ENCODE measurements at regions of chr19 and their contacts with region 1.

Region 1: DNA sequence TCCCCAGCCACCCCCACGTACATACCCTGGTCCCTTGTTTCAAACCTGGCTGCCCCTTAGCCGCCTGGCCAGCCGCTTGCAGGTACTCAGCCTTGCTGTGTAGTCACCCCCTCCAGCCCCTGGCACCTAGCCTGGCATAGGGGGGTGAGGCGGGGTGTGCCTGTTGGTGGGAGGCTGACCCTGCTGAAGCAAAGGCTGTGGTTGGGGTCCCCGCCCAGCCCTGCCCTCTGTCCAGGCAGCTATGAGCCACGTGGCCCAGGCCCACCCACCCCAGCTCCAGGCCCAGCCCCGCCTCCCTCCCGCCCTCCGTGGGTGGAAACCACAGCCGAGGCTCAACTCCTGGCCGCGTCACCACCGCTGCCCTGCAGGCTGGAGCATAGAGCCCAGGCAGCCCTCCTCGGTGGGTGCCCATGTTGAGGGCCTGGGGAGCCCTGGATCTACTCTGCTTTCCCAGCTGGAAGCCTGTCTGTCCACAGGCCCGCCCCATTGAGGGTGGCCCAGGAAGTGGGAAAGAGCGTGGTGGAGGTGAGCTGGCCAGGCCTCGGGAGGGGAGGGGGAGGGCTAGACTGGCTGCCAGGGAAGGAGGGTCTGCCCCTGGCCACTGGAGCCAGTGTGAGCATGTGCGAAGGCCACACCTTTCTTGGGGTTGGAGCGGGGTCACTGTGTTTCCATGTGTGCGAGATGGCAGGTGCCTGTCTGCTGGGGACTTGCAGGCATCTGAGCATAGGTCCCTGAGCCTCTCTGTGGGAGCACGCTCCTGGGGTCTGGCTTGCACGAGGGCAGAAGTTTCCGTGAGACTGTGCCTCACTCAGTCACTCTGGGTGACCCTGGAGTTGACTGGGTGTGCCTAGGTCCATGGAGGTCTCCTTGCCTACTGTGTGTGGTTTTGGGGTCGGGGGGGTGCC is 31.0 kb downstream of the PAK4 start:
- DNase-seq: no peak
- H3K4me3 ChIP-seq: no peak overlapping the region
- H3K4me3 Mint-ChIP-seq: no peak overlapping the region
- H3K27ac ChIP-seq: no peak overlapping the region
- H3K27ac Mint-ChIP-seq: peak overlapping the region in 1 of 8 donors; percentile 3
- H3K4me1 ChIP-seq: no peaks in the 10 kb centered on the region
- H3K4me1 Mint-ChIP-seq: peaks cover 29 to 47% (median 35%) of the 10 kb centered on the region in 3 donors
- H3K27me3 ChIP-seq: no peaks in the 10 kb centered on the region
- H3K27me3 Mint-ChIP-seq: no peaks in the 10 kb centered on the region

Region 2: GRCh38 chr19:38658462-38659306 is 497.9 kb before region 1 on chr19:
- CTCF ChIA-PET with region 1: no interaction called
- POLR2A ChIA-PET with region 1: interaction called, 11 read pairs
- DNase-seq: no peak
- H3K4me3 ChIP-seq: no peak overlapping the region
- H3K4me3 Mint-ChIP-seq: peak overlapping the region in 2 of 7 donors; percentile 20 to 84
- H3K27ac ChIP-seq: no peak overlapping the region
- H3K27ac Mint-ChIP-seq: peak overlapping the region; percentile 57 to 94 (median 83)
- H3K4me1 ChIP-seq: peaks cover 75% of the 10 kb centered on the region
- H3K4me1 Mint-ChIP-seq: peaks cover 75 to 93% (median 87%) of the 10 kb centered on the region in 3 donors
- H3K27me3 ChIP-seq: no peaks in the 10 kb centered on the region
- H3K27me3 Mint-ChIP-seq: no peaks in the 10 kb centered on the region

Region 3: DNA sequence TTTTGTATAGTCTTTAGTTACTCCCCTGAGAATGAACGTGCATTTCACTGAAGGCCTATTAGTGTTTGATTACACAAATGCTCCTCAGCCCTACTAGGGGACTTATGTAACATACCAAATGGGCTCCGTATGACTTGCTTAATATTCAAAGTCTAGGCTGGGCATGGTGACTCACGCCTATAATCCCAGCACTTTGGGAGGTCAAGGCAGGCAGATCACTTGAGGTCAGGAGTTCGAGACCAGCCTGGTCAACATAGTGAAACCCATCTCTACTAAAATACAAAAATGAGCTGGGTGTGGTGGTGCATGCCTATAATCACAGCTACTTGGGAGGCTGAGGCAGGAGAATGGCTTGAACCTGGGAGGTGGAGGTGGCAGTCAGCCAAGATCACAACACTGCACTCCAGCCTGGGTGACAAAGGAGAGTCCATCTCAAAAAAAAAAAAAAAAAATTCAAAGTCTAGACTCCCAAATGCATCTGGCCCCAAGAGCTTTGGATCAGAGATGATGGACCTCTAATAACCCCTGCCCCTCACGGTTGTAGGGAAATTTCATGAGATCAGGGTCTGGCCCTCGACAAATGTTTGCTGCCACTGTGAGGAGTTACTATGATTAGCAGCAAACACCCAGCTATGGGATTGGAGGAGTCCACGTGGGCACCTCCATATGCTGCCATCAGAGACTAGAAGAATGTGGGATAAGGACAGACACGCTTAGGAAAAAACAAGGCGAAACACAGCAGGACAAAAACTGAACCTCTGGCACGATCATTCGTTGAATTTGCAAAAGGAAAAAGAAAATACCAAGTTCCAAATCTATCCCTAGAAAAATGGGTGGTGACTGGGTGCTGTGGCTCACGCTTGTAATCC is 185.7 kb before region 1 on chr19:
- CTCF ChIA-PET with region 1: no interaction called
- POLR2A ChIA-PET with region 1: no interaction called
- DNase-seq: no peak
- H3K4me3 ChIP-seq: no peak overlapping the region
- H3K4me3 Mint-ChIP-seq: no peak overlapping the region
- H3K27ac ChIP-seq: no peak overlapping the region
- H3K27ac Mint-ChIP-seq: no peak overlapping the region
- H3K4me1 ChIP-seq: no peaks in the 10 kb centered on the region
- H3K4me1 Mint-ChIP-seq: peaks cover 5 to 10% (median 7%) of the 10 kb centered on the region in 3 donors
- H3K27me3 ChIP-seq: peaks cover 1% of the 10 kb centered on the region
- H3K27me3 Mint-ChIP-seq: peaks cover 10 to 23% of the 10 kb centered on the region in 2 donors

Region 4: DNA sequence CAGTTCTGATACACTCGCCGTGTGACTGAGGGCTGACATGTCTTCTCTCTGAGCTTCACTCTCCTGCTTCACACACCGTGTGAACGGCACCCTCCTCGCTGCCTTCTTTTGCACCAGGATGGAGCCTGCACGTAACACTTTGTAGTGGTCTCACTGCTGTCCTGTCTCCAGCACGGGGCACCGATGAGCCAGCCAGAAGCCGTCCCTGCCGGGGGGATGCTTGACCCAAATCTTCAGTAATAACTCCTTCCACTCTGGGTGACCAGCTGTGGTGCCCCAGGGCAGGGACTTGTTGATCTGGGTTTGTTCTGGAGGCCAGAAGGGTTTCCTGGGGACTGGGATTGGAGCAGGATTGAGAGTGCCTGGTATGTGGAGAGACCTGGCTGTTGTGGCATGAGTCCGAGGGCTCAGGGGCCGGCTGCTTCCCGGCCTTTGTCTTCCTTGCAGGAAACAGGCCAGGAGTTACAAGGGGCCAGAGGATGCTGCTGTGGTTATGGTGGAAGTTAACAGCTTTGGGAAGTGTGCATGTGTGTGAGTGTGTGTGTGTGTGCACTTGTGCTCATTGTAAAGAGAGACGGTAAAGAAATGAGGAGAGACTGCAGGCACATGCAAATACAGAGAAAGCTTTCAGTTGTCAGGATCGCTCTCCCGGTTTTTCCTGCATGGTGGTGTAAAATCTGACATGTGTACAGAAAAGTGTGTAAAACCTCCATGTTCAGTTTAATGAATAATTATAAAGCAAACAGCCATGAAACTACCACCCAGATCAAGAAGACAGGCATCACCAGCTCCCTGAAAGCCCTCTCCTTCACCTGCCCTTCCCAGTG is 12.1 kb before region 1 on chr19:
- CTCF ChIA-PET with region 1: no interaction called
- POLR2A ChIA-PET with region 1: no interaction called
- DNase-seq: no peak
- H3K4me3 ChIP-seq: no peak overlapping the region
- H3K4me3 Mint-ChIP-seq: no peak overlapping the region
- H3K27ac ChIP-seq: no peak overlapping the region
- H3K27ac Mint-ChIP-seq: peak overlapping the region in 2 of 8 donors; percentile 34 to 55
- H3K4me1 ChIP-seq: no peaks in the 10 kb centered on the region
- H3K4me1 Mint-ChIP-seq: peaks cover 21 to 44% (median 24%) of the 10 kb centered on the region in 3 donors
- H3K27me3 ChIP-seq: no peaks in the 10 kb centered on the region
- H3K27me3 Mint-ChIP-seq: no peaks in the 10 kb centered on the region

Region 5: GRCh38 chr19:39277612-39278011 is 121.0 kb after region 1 on chr19:
- CTCF ChIA-PET with region 1: no interaction called
- POLR2A ChIA-PET with region 1: no interaction called
- DNase-seq: no peak
- H3K4me3 ChIP-seq: no peak overlapping the region
- H3K4me3 Mint-ChIP-seq: no peak overlapping the region
- H3K27ac ChIP-seq: no peak overlapping the region
- H3K27ac Mint-ChIP-seq: peak overlapping the region in 2 of 8 donors; percentile 66 to 69
- H3K4me1 ChIP-seq: no peaks in the 10 kb centered on the region
- H3K4me1 Mint-ChIP-seq: no peaks in the 10 kb centered on the region
- H3K27me3 ChIP-seq: no peaks in the 10 kb centered on the region
- H3K27me3 Mint-ChIP-seq: peaks cover 4 to 6% of the 10 kb centered on the region in 2 donors

Measured in CD8-positive, alpha-beta memory T cell (primary cell).